ENCODE measurements at regions of chr10 and their contacts with region 1.

Region 1: GRCh38 chr10:100338434-100339036 is 8.5 kb upstream of the SCD start:
- DNase-seq: peak; percentile 70
- H3K4me3 Mint-ChIP-seq: no peak overlapping the region
- H3K27ac Mint-ChIP-seq: no peak overlapping the region
- H3K4me1 Mint-ChIP-seq: peaks cover 13% of the 10 kb centered on the region
- H3K27me3 Mint-ChIP-seq: peaks cover 15% of the 10 kb centered on the region
- CTCF ChIP-seq: peak; percentile 87

Region 2: DNA sequence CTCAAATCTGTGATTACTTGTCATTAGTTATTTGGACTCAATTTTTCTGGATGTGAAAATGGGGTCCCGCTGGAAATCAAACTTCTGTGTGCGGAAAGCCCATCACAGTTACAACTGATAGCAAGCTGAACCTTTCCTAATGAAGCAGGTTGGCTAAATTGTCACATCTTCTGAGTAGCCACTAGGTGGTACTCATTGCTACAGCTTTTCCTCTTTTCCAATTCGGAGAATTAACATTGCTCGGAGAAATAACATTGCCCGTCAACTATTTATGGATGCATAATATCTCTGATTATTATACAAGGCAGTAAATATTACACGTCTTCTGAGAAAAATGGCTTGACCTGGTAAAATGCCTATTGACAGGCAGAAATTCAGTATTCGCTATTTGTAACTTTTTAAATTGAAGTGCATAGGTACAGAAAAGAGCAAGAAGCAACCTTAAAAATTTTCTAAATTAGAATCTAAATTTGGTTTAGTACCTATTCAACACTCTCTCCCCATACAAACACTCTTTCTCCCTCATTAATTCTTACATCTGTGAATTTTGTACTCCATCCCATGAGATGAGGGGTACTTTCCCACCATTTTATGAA is 34.7 kb before region 1 on chr10:
- CTCF ChIA-PET with region 1: interaction called, 9 read pairs
- POLR2A ChIA-PET with region 1: no interaction called
- intact Hi-C with region 1: loop called (anchors 1 kb)
- DNase-seq: peak; percentile 14
- H3K4me3 Mint-ChIP-seq: no peak overlapping the region
- H3K27ac Mint-ChIP-seq: no peak overlapping the region
- H3K4me1 Mint-ChIP-seq: no peaks in the 10 kb centered on the region
- H3K27me3 Mint-ChIP-seq: peaks cover 31% of the 10 kb centered on the region
- CTCF ChIP-seq: peak; percentile 49

Region 3: DNA sequence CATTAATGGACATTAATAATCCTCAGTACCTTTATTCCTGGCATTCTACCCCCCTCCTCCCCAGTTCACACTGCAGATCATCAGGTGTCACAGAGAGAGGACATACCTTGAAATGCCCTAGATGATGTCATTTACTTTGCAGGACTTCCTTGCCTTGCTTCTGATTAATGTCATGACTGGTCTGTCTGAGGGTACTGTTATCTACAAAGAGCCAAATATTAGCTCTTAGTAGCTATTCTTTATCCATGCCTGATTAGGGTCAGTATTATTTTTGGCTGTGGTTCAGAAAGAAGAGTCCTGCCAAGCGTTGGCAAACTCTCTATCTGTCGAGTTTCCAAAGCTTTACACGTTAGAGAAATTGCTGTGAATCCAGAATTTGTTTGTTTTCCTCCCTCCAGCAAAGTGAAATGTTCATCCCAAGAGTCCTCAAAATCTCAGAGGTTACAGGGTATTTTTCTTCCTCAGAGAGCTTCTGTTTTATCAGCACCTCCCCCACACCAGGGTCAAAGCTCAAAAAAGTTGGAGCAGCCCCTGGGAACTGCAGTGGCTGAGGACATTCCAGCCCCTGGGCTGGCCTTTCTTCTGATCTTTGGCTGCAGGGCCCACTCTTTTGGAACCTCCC is 21.1 kb after region 1 on chr10:
- CTCF ChIA-PET with region 1: interaction called, 13 read pairs
- POLR2A ChIA-PET with region 1: interaction called, 493 read pairs
- intact Hi-C with region 1: no loop called
- DNase-seq: no peak
- H3K4me3 Mint-ChIP-seq: no peak overlapping the region
- H3K27ac Mint-ChIP-seq: peak overlapping the region; percentile 43
- H3K4me1 Mint-ChIP-seq: peaks cover 69% of the 10 kb centered on the region
- H3K27me3 Mint-ChIP-seq: no peaks in the 10 kb centered on the region
- CTCF ChIP-seq: no peak

Region 4: GRCh38 chr10:100419911-100420449 is 81.4 kb after region 1 on chr10:
- CTCF ChIA-PET with region 1: interaction called, 17 read pairs
- POLR2A ChIA-PET with region 1: no interaction called
- intact Hi-C with region 1: no loop called
- DNase-seq: no peak
- H3K4me3 Mint-ChIP-seq: no peak overlapping the region
- H3K27ac Mint-ChIP-seq: no peak overlapping the region
- H3K4me1 Mint-ChIP-seq: no peaks in the 10 kb centered on the region
- H3K27me3 Mint-ChIP-seq: no peaks in the 10 kb centered on the region
- CTCF ChIP-seq: no peak

Region 5: DNA sequence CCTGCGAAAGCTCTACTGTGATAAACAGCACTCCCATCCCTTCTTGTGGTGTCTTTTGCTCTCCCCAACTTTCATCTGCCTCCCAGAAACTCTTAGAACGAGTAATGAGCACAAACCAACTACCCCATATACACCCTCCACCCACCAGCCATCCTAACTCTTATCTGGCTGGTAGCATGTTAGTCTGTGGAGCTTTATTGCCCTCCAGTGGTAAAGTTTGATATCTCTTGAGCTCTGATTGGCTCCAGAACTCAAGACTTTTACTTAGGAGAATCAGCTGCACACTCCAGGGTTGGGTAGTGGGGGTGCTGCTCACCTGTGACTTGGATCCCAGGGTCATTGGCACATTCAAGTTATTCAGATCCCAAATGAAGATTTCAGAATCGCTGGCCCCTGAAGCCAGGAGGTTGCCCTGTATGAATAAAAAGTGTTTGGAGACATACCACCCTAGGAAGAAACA is 170.2 kb after region 1 on chr10:
- CTCF ChIA-PET with region 1: interaction called, 13 read pairs
- POLR2A ChIA-PET with region 1: no interaction called
- intact Hi-C with region 1: loop called (anchors 1 kb)
- DNase-seq: peak; percentile 59
- H3K4me3 Mint-ChIP-seq: no peak overlapping the region
- H3K27ac Mint-ChIP-seq: no peak overlapping the region
- H3K4me1 Mint-ChIP-seq: no peaks in the 10 kb centered on the region
- H3K27me3 Mint-ChIP-seq: no peaks in the 10 kb centered on the region
- CTCF ChIP-seq: peak; percentile 62

Region 6: DNA sequence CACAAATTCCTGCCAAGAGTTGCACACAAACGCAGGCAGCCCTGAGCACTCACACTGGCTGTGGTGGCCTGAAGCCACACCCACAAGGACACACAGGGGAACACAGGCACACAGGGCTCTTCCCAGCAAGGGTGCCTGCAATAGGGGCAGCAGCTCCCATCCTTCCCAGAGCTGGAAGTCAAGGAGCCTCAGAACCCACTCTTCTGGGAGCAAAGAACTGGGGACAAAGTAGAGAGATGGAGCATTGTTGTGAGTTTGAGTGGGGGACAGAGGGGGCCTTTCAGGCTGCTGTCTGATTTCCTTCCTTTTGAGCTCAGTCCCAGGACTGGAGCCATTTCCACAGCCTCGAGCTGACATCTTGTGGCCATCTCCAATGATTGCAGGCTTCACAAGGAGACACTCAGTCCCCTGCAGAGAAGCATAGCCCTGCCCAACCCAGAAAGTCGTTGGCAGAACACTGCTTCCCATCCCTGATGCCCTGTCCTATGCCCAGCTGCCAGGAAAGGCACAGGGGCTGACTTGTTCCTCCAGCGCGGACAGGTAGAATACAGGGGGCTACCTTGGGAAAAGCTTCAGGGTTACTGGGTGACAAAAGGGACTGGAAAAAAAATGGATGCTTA is 539.9 kb after region 1 on chr10:
- CTCF ChIA-PET with region 1: interaction called, 23 read pairs
- POLR2A ChIA-PET with region 1: interaction called, 5 read pairs
- intact Hi-C with region 1: loop called (anchors 2 kb)
- DNase-seq: peak; percentile 78
- H3K4me3 Mint-ChIP-seq: no peak overlapping the region
- H3K27ac Mint-ChIP-seq: no peak overlapping the region
- H3K4me1 Mint-ChIP-seq: peaks cover 7% of the 10 kb centered on the region
- H3K27me3 Mint-ChIP-seq: no peaks in the 10 kb centered on the region
- CTCF ChIP-seq: peak; percentile 73